CD8-positive, alpha-beta memory T cell (primary cell): ENCODE measurements at regions of chr1 and their contacts with region 1.

Region 1: DNA sequence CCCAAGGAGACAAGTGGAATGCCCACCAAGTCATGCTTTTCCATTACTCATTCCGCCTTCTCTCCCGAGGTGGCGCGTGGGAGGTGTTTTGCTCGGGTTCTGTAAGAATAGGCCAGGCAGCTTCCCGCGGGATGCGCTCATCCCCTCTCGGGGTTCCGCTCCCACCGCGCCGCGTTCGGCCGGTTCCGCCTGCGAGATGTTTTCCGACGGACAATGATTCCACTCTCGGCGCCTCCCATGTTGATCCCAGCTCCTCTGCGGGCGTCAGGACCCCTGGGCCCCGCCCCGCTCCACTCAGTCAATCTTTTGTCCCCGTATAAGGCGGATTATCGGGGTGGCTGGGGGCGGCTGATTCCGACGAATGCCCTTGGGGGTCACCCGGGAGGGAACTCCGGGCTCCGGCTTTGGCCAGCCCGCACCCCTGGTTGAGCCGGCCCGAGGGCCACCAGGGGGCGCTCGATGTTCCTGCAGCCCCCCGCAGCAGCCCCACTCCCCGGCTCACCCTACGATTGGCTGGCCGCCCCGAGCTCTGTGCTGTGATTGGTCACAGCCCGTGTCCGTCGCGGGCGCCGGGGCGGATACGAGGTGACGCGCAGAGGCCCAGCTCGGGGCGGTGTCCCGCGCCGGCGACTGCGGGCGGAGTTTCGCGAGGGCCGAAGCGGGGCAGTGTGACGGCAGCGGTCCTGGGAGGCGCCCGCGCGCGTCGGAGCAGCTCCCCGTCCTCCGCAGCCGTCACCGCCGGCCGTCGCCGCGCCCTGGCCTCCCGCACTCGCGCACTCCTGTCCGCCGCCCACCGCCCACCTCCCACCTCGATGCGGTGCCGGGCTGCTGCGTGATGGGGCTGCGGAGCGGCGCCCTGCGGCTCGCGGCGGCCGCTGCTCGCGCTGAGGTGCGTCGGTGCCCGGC is at the start of gene KIF1B:
- DNase-seq: peak; percentile 96 to 98 (median 96)
- H3K4me3 ChIP-seq: peak within 1 kb of the TSS; percentile 75
- H3K4me3 Mint-ChIP-seq: peak within 1 kb of the TSS; percentile 82 to 91 (median 88)
- H3K27ac ChIP-seq: peak within 1 kb of the TSS; percentile 65
- H3K27ac Mint-ChIP-seq: peak within 1 kb of the TSS; percentile 50 to 87 (median 72)
- H3K4me1 ChIP-seq: peaks cover 19% of the 10 kb centered on the region
- H3K4me1 Mint-ChIP-seq: peaks cover 17 to 39% (median 31%) of the 10 kb centered on the region in 3 donors
- H3K27me3 ChIP-seq: no peaks in the 10 kb centered on the region
- H3K27me3 Mint-ChIP-seq: peaks cover 0 to 3% of the 10 kb centered on the region in 2 donors
- total RNA-seq, gene KIF1B: 17.5 to 17.8 TPM

Region 2: DNA sequence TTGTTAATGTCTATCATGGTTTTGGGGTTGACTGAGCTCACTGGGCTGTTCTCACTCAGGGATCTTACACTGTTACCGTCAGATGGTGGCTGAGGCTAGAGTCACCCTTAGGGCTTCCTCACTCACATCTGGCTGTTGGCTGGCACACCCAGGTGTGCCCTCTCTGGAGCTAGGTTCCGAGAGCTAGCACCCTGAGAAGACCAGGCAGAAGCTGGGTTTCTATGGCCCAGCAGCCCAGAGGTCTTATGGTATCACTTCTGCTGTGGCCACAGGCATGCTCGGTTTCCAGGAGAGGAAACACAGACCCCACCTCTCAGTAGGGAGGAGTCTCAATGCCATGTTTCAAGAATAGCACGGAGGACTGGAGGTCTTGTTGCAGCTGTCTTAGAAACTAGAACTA is 20.5 kb before region 1 on chr1:
- CTCF ChIA-PET with region 1: interaction called, 12 read pairs
- POLR2A ChIA-PET with region 1: no interaction called
- DNase-seq: no peak
- H3K4me3 ChIP-seq: no peak overlapping the region
- H3K4me3 Mint-ChIP-seq: no peak overlapping the region
- H3K27ac ChIP-seq: no peak overlapping the region
- H3K27ac Mint-ChIP-seq: no peak overlapping the region
- H3K4me1 ChIP-seq: no peaks in the 10 kb centered on the region
- H3K4me1 Mint-ChIP-seq: no peaks in the 10 kb centered on the region
- H3K27me3 ChIP-seq: no peaks in the 10 kb centered on the region
- H3K27me3 Mint-ChIP-seq: peaks cover 1 to 4% of the 10 kb centered on the region in 2 donors

Region 3: DNA sequence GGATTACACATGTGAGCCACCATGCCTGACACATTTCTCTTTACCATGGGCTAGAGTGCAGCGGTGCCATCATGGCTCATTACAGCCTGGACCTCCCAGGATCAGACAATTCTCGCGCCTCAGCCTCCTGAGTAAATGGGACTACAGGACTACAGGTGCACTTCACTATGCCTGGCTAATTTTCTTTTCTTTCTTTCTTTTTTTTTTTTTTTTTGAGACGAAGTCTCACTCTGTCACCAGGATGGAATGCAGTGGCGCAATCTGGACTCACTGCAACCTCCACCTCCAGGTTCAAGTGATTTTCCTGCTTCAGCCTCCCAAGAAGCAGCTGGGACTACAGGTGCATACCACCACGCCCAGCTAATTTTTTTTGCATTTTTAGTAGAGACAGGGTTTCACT is 14.6 kb before region 1 on chr1:
- CTCF ChIA-PET with region 1: interaction called, 18 read pairs
- POLR2A ChIA-PET with region 1: no interaction called
- DNase-seq: no peak
- H3K4me3 ChIP-seq: no peak overlapping the region
- H3K4me3 Mint-ChIP-seq: no peak overlapping the region
- H3K27ac ChIP-seq: no peak overlapping the region
- H3K27ac Mint-ChIP-seq: no peak overlapping the region
- H3K4me1 ChIP-seq: no peaks in the 10 kb centered on the region
- H3K4me1 Mint-ChIP-seq: no peaks in the 10 kb centered on the region
- H3K27me3 ChIP-seq: no peaks in the 10 kb centered on the region
- H3K27me3 Mint-ChIP-seq: peaks cover 7% of the 10 kb centered on the region in 2 donors

Region 4: DNA sequence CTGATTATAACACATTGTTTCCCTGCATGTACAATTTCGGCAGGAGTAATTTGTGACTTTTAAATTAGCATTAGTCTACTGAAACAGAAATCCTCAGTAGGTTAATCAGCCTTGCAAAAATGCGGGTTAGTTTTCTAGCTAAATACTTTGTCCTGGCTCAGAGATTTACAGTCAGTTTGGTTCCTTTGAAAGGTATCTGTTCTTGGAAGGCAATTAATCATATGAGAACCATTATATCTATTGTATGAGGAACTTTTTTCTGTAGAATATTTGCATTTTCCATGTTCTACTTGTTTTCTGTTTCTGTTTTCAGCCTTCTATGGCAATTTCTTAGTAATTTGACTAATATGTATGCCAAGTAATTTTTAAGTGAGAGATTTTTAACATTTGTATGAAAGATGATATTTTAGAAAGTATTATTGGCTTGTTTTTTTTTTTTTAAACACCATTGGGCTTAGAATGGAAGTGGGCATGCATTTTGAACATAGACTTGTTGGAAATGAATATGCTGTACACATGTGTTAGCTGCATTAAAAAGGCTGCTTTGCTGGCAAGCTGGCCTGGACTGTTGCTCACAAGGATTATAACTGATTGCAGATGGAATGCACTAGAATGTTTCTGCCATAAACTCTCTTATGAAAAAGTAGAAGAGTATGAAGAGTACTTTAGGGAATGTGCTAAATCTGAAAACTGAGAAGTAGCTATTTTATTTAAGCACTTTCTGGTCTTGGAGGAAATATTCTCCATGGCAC is 26.4 kb after region 1 on chr1:
- CTCF ChIA-PET with region 1: interaction called, 10 read pairs
- POLR2A ChIA-PET with region 1: no interaction called
- DNase-seq: no peak
- H3K4me3 ChIP-seq: no peak overlapping the region
- H3K4me3 Mint-ChIP-seq: no peak overlapping the region
- H3K27ac ChIP-seq: no peak overlapping the region
- H3K27ac Mint-ChIP-seq: peak overlapping the region in 1 of 8 donors; percentile 57
- H3K4me1 ChIP-seq: no peaks in the 10 kb centered on the region
- H3K4me1 Mint-ChIP-seq: peaks cover 0 to 14% (median 4%) of the 10 kb centered on the region in 3 donors
- H3K27me3 ChIP-seq: no peaks in the 10 kb centered on the region
- H3K27me3 Mint-ChIP-seq: no peaks in the 10 kb centered on the region

Region 5: DNA sequence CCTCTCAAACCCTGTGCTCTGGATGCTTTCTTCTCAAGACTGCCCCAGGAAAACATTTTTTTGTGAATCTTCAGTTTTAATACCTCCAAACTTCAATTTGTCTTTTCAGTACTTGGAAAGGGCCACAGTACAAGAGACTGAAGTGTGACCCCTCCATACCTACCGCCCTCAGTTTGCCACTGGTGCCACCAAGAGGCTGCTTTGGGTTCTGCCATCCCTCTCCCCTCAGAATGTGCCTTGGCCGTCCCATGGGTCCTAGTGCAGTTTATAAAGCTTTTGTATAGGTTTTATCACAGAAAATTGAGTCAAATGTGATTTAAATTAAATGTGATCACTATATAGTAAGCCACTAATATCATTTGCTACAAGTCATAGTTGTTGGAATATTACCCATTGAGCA is 127.9 kb after region 1 on chr1:
- CTCF ChIA-PET with region 1: interaction called, 11 read pairs
- POLR2A ChIA-PET with region 1: no interaction called
- DNase-seq: peak in 4 of 5 donors; percentile 4 to 50 (median 17)
- H3K4me3 ChIP-seq: no peak overlapping the region
- H3K4me3 Mint-ChIP-seq: no peak overlapping the region
- H3K27ac ChIP-seq: no peak overlapping the region
- H3K27ac Mint-ChIP-seq: peak overlapping the region in 2 of 8 donors; percentile 17 to 68
- H3K4me1 ChIP-seq: no peaks in the 10 kb centered on the region
- H3K4me1 Mint-ChIP-seq: no peaks in the 10 kb centered on the region
- H3K27me3 ChIP-seq: no peaks in the 10 kb centered on the region
- H3K27me3 Mint-ChIP-seq: no peaks in the 10 kb centered on the region

Region 6: DNA sequence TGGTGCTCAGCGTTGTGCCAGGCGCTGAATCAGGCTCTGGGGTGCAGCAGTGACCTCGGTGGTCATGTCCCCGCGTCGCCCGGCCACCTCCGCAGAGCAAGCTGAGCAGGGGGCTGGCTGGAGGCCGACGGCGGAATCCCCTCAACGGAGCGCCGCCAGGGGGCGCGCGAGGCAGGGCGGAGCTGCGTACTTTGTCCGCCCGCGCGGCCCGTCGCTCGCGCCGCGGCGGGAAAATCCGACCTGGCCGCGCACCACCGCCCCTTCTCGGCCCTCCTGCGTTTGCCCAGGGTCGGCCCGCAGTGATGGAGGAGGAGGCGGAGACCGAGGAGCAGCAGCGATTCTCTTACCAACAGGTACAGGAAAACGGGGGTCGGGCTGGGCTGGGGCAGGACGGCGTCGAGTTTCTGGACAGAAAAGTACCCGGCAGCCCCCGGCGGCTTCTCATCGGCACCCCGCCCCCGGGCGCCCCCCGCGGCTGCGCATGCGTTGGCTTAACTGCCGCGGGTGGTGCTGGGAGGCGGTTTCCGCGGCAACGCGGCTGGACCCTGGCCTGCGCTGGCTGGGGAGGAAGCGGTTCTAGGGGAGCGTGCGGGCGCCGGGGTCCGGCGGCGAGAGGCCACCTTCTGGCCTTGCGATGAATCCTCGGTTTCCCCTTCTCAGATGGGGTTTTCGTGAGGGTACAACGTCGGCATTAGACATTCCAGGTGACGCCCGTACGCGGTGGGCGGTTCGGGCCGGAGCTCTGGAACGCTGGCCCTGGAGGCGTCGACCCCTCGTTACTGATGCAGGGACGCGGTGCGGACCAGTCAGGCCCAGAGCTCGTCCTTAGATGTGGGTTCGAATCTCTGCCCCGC is 220.3 kb after region 1 on chr1 and contains the start of gene CENPS:
- CTCF ChIA-PET with region 1: interaction called, 37 read pairs
- POLR2A ChIA-PET with region 1: no interaction called
- DNase-seq: peak; percentile 83 to 94 (median 91)
- H3K4me3 ChIP-seq: peak within 1 kb of the TSS; percentile 82
- H3K4me3 Mint-ChIP-seq: peak within 1 kb of the TSS; percentile 83 to 96 (median 89)
- H3K27ac ChIP-seq: peak within 1 kb of the TSS; percentile 82
- H3K27ac Mint-ChIP-seq: peak within 1 kb of the TSS; percentile 83 to 95 (median 90)
- H3K4me1 ChIP-seq: peaks cover 18% of the 10 kb centered on the region
- H3K4me1 Mint-ChIP-seq: peaks cover 15 to 33% (median 21%) of the 10 kb centered on the region in 3 donors
- H3K27me3 ChIP-seq: no peaks in the 10 kb centered on the region
- H3K27me3 Mint-ChIP-seq: peaks cover 0 to 1% of the 10 kb centered on the region in 2 donors
- total RNA-seq, gene CENPS: 32.2 TPM